CD8-positive, alpha-beta T cell (primary cell): ENCODE measurements at regions of chr20 and their contacts with region 1.

Region 1: DNA sequence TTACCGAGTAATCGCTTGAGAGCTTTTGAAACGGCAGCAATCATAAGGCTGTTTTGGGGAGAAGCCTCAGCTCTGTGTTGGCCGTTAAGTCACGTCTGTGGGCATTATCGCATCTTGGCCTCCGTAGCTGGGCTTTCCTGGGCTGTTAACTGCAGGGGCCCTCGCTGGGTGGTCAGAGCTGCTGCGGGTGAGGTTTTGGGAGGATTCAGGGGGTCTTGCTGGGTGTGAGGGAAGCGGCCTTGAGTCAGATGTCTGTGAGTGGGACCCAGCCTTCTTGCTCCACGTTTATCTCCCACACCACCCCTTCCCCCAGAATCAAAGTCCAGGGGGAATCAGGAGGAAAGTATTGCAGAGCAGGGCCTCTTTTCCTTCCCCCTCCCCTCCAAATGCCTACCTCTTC is 3.2 kb upstream of the APCDD1L start:
- DNase-seq: no peak
- ATAC-seq: no peak
- H3K4me3 ChIP-seq: no peak overlapping the region
- H3K4me3 Mint-ChIP-seq: no peak overlapping the region
- H3K27ac ChIP-seq: no peak overlapping the region
- H3K27ac Mint-ChIP-seq: no peak overlapping the region
- H3K4me1 ChIP-seq: no peaks in the 10 kb centered on the region
- H3K4me1 Mint-ChIP-seq: no peaks in the 10 kb centered on the region
- H3K27me3 ChIP-seq: peaks cover 0 to 4% of the 10 kb centered on the region in 2 experiments
- H3K27me3 Mint-ChIP-seq: peaks cover 22% of the 10 kb centered on the region
- CTCF ChIP-seq: no peak

Region 2: DNA sequence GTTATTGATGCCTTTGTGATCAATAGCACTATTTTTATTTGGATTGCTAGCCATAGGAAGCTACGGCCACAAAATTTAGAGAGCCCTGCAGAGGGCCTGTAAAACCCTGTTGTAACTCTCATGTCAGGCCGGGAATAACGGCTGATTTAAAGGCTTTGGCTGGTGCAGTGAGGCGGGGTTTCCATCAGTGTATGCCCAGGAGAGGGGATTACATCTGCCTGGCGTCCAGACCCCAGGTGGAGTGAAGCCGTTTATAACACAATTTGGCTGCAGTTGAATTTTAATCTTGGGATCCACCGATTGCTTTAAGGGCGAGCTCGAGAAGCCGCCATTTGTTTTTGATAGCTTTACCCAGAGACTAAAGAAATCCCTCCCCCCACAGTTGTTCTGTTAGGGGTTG is 25.9 kb after region 1 on chr20:
- CTCF ChIA-PET with region 1: no interaction called
- POLR2A ChIA-PET with region 1: no interaction called
- intact Hi-C with region 1: loop called in 1 of 2 experiments (anchors 1 kb)
- DNase-seq: peak in 2 of 9 experiments; percentile 6 to 27
- ATAC-seq: no peak
- H3K4me3 ChIP-seq: no peak overlapping the region
- H3K4me3 Mint-ChIP-seq: no peak overlapping the region
- H3K27ac ChIP-seq: no peak overlapping the region
- H3K27ac Mint-ChIP-seq: no peak overlapping the region
- H3K4me1 ChIP-seq: no peaks in the 10 kb centered on the region
- H3K4me1 Mint-ChIP-seq: no peaks in the 10 kb centered on the region
- H3K27me3 ChIP-seq: no peaks in the 10 kb centered on the region
- H3K27me3 Mint-ChIP-seq: peaks cover 7% of the 10 kb centered on the region
- CTCF ChIP-seq: no peak